Left ventricle myocardium superior (tissue), 1 donor: ENCODE measurements at regions of chr6 and their contacts with region 1.

Region 1: GRCh38 chr6:15264902-15265761 is 19.3 kb downstream of the JARID2 start:
- DNase-seq: peak; percentile 58
- ATAC-seq: peak; percentile 73

Region 2: GRCh38 chr6:14984519-14984853 is 280.6 kb before region 1 on chr6:
- intact Hi-C with region 1: no loop called
- DNase-seq: peak; percentile 38
- ATAC-seq: peak; percentile 78

Region 3: DNA sequence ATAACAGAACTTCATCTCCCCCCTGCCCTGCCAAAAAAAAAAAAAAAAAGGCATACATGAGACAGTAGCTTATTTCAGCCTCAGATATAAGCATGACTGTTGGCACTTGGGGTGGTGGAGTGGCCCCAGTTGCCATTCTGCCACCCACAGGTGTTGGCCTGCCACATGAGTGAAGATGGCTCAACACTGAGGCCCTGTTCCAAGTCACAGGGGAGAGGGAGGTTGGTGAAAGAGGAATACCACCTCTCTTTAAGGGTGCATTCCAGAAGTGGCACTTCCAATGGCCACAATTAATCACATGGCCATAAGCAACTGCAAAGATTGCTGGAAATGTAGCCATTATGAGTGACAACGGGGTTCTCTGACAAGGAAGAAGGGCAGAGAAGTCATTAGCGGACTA is 81.2 kb before region 1 on chr6:
- intact Hi-C with region 1: no loop called
- DNase-seq: no peak
- ATAC-seq: no peak

Region 4: DNA sequence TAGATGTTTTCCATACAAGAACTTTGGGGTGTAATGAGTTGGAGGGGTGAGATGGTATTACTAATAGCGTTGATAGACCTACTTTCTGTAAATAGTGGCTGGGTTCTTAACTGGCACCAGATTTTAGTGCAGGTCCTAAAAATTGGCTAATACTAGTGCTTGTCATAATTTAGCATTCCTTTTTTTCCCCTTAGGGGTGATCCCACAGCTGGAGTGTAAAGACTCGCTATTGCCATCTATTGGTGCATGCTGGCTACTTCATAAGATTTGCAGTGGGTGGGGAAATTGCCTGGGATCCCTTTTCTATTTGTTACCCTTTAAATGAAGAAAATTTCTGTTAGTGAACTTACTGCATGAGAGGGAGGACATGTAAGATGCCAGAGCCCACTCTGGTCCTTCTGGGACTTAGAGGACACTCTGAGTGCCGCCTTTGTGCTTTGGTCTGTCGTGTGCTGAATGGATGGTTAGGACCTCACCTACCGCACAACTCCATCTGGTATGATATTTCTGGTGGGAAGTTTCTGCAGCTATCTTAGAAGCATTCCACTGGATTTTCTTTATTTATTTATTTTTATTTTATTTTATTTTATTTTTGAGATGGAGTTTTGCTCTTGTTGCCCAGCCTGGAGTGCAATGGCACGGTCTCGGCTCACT is 176.2 kb after region 1 on chr6:
- intact Hi-C with region 1: loop called (anchors 10 kb)
- DNase-seq: no peak
- ATAC-seq: peak; percentile 74

Region 5: DNA sequence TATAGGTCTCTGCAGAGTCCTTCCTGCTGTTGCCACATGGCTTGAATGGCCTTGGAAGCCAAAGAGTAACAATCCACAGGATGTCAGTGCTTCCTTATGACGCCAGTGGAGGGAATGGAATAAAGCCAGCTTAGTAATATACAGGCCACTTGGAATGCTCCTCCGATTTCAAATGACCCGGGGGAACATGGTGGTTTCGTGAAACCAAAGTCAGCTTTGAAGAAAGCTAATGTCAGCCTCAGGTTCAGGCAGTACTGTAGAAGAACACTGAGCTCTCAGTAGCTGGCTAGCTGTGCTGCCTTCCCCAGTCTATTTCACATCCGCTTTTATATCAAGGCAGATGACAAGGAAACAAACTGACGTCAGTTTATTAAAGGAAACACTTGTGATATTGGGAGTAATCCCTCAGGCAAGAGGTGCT is 208.6 kb after region 1 on chr6:
- intact Hi-C with region 1: no loop called
- DNase-seq: no peak
- ATAC-seq: peak; percentile 78